ENCODE measurements at regions of chr13 and their contacts with region 1.

Region 1: DNA sequence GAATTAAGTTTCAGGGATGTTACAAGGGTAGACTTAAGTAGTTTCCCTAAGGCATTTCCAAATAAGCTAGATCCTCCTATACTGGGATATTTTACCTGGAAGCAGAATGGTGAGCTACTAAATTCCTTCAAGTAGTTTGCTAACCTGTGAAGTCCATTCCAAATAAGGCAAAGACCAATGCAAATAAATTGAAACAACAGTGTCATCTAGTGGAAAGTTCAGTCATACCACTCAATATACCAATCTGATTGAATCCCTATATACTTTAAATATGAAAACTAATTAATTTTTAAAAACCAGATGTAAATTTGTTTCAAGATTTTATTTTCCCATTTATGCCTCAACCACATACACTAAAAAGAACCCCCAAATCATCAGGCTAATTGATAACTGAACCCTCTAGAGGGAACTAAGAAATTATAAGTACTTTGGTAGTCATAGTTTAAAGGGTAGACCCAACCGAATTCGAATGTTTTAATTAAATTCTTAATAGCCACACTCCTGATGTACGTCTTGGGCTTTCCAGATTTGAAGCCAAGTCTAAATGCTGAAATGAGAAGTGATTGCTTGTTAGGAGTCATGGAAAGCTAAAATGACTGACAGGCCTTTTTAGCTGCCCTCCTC is 223.7 kb downstream of the TBC1D4 start:
- DNase-seq: peak in 1 of 2 experiments; percentile 43
- H3K4me3 ChIP-seq: no peak overlapping the region
- H3K4me3 Mint-ChIP-seq: no peak overlapping the region
- H3K27ac Mint-ChIP-seq: no peak overlapping the region
- H3K4me1 ChIP-seq: peaks cover 22% of the 10 kb centered on the region; the same call in 1 of the 2 replicates
- H3K4me1 Mint-ChIP-seq: peaks cover 24% of the 10 kb centered on the region
- H3K27me3 ChIP-seq: no peaks in the 10 kb centered on the region
- H3K27me3 Mint-ChIP-seq: no peaks in the 10 kb centered on the region
- CTCF ChIP-seq: peak; percentile 73 to 75

Region 2: DNA sequence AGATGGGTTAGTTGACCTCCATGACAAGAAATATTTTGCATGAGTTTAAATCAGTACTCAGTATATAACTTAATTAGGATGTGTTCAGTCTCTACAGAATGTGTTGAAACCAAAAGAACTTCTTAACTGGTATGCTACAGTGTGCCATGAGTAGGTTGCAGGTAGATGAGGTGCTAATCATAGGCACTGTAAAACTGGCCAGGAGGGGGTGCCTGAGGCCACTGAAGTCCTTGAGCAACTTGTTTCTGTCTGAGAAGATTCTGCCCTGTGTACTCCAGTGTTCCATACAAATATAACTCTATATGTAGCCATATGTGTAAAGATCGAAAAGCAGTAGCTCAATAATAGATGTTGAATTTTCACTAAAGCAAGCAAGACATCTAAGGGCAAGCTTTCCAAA is 574.9 kb before region 1 on chr13:
- CTCF ChIA-PET with region 1: no interaction called
- POLR2A ChIA-PET with region 1: no interaction called
- intact Hi-C with region 1: loop called (anchors 2 kb)
- DNase-seq: peak in 1 of 2 experiments; percentile 19
- H3K4me3 ChIP-seq: no peak overlapping the region
- H3K4me3 Mint-ChIP-seq: no peak overlapping the region
- H3K27ac Mint-ChIP-seq: no peak overlapping the region
- H3K4me1 ChIP-seq: no peaks in the 10 kb centered on the region
- H3K4me1 Mint-ChIP-seq: no peaks in the 10 kb centered on the region
- H3K27me3 ChIP-seq: no peaks in the 10 kb centered on the region; the same call in 1 of the 2 replicates
- H3K27me3 Mint-ChIP-seq: peaks cover 10% of the 10 kb centered on the region
- CTCF ChIP-seq: peak in 1 of 2 experiments; percentile 51

Region 3: DNA sequence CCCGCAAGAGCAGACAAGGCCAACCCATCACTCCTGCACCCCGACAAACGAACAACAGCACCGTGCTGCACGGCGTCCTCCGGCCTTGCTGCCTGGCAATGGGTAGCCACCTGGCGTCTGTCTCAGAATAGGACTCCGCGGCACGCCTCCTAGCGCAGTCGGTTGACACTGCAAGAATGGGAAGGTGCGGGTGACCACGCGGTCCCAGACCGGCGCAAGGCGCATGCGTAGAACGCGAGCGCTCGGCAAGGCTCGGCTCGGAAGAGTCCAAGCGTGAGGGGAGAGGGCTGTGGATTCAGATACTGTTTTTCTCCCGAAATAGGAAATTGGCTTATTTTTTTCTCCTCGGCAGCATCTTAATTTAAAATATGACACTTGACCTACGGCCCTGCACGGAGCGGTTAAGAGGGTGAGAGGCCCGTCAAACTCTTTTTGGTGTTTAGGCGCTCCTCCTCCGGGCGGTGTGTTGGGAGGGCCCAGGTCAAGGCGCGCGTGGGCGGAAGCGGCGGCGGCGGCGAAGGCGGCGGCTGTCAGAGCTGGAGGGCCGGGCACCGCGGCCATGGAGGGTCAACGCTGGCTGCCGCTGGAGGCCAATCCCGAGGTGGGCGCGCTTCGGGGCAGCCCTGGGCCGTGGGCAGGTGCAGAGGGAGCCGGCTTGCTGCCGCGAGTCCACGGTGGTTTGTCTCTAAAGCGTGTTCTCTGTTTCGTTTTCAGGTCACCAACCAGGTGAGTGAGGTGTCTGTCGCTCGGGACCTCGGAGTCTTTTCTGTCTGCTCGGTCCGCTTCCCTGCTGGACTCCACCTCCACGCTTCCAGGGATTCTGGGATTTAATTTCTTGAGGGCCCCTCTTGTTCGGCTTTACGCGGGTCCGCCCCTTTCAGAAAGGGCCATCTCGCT is 291.2 kb after region 1 on chr13 and contains the start of gene UCHL3:
- CTCF ChIA-PET with region 1: no interaction called
- POLR2A ChIA-PET with region 1: no interaction called
- intact Hi-C with region 1: no loop called
- DNase-seq: peak; percentile 97 to 99
- H3K4me3 ChIP-seq: peak within 1 kb of the TSS; percentile 85
- H3K4me3 Mint-ChIP-seq: peak within 1 kb of the TSS; percentile 91
- H3K27ac Mint-ChIP-seq: peak within 1 kb of the TSS; percentile 85
- H3K4me1 ChIP-seq: peaks cover 9% of the 10 kb centered on the region; the same call in 1 of the 2 replicates
- H3K4me1 Mint-ChIP-seq: peaks cover 38% of the 10 kb centered on the region
- H3K27me3 ChIP-seq: no peaks in the 10 kb centered on the region
- H3K27me3 Mint-ChIP-seq: no peaks in the 10 kb centered on the region
- CTCF ChIP-seq: peak; percentile 90 to 99
- total RNA-seq, gene UCHL3: 113 and 122 TPM in 2 replicates

Measured in Caco-2 (cell line).